Dorsolateral prefrontal cortex (tissue), 120 donors: ENCODE measurements at regions of chrX and their contacts with region 1.

Region 1: GRCh38 chrX:49043220-49043986 is at the start of gene TFE3:
- DNase-seq: peak; percentile 87 to 98 (median 97)
- H3K4me3 ChIP-seq: peak within 1 kb of the TSS; percentile 45 to 88 (median 75)
- H3K27ac ChIP-seq: peak within 1 kb of the TSS in 58 of 59 donors; percentile 61 to 98 (median 93)
- H3K27me3 ChIP-seq: peaks cover 0 to 20% (median 0%) of the 10 kb centered on the region in 45 donors
- CTCF ChIP-seq: peak; percentile 33 to 80 (median 66)
- total RNA-seq, gene TFE3: 45.0 to 84.2 (median 59.0) TPM

Region 2: DNA sequence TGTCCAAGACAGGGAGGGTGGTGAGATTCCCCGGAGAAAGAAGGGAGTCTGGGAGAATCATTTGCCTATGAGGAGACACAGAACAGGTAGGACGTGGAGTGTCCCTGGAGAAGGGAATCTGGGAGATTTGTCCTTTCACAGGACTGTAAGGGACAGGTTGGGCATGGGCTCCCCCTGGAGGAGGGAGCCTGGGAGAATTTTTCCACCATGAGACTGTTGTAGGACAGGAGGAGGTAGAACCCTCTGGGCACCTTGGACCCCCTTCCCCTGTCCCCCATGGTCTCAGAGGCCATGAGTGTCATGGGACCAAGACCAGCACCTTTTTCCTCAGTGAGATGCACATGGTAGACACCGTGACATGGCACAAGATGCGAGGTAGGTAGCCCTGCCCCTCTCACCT is 531.8 kb before region 1 on chrX:
- intact Hi-C with region 1: no loop called
- DNase-seq: no peak
- H3K4me3 ChIP-seq: no peak overlapping the region
- H3K27ac ChIP-seq: no peak overlapping the region
- H3K27me3 ChIP-seq: peaks cover 0 to 69% (median 5%) of the 10 kb centered on the region in 45 donors
- CTCF ChIP-seq: peak in 8 of 56 donors; percentile 10 to 20 (median 14)

Region 3: GRCh38 chrX:48957827-48958634 is 85.4 kb before region 1 on chrX:
- intact Hi-C with region 1: loop called in 1 of 2 experiments (anchors 5 kb)
- DNase-seq: peak; percentile 87 to 98 (median 96)
- H3K4me3 ChIP-seq: peak overlapping the region; percentile 34 to 79 (median 68)
- H3K27ac ChIP-seq: peak overlapping the region; percentile 79 to 99 (median 95)
- H3K27me3 ChIP-seq: peaks cover 0 to 41% (median 0%) of the 10 kb centered on the region in 45 donors
- CTCF ChIP-seq: peak in 1 of 56 donors; percentile 9

Region 4: DNA sequence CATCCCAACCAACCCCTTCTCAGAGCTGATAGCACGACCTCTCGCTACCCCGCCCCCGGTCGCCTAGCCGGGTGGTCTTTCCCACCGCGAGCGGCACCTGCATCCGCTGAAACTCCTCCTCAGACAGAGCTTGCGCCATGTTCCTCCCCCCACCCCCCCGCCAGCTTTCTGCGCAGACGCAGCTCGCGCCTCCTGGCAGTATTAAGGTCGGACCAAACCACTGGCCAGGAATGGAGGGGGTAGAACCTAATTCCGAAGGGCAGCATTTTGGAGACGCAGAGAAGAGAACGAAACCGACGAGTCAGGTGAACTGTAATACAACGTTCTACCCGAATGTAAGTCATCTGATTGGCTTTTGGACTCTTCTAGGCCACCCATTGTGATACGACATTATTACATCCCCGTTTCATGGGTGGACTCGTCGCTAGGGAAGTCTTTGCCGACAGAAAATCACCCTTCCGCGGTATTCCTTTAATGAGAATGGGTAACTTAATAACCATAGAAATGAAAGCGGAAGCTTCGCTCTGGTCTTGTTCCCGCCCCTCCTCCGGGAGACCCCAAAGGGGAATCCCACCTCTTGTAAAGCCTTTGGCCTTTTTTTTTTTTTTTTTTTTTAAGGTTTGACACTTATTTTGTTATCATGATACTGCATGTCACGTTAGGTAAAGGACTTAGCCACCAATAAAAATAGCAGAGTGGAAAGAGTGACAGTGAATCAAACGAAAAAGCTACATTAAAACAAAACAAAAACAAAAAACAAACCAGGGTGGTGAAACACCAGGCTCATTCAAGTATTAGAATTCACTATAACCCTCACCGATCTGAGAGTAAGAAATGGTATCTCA is 41.1 kb before region 1 on chrX and contains the start of gene GRIPAP1:
- intact Hi-C with region 1: loop called in 1 of 2 experiments (anchors 2 kb)
- DNase-seq: peak in 9 of 10 donors; percentile 24 to 71 (median 50)
- H3K4me3 ChIP-seq: peak within 1 kb of the TSS; percentile 41 to 86 (median 71)
- H3K27ac ChIP-seq: peak within 1 kb of the TSS in 58 of 59 donors; percentile 12 to 97 (median 88)
- H3K27me3 ChIP-seq: peaks cover 0 to 31% (median 0%) of the 10 kb centered on the region in 45 donors
- CTCF ChIP-seq: no peak
- total RNA-seq, gene GRIPAP1: 95.2 to 201 (median 126) TPM

Region 5: GRCh38 chrX:49079489-49080428 is 36.4 kb after region 1 on chrX and contains the start of gene WDR45:
- intact Hi-C with region 1: loop called in 1 of 2 experiments (anchors 5 kb)
- DNase-seq: peak; percentile 52 to 84 (median 73)
- H3K4me3 ChIP-seq: peak within 1 kb of the TSS; percentile 43 to 80 (median 70)
- H3K27ac ChIP-seq: peak within 1 kb of the TSS; percentile 63 to 96 (median 91)
- H3K27me3 ChIP-seq: peaks cover 0 to 42% (median 0%) of the 10 kb centered on the region in 45 donors
- CTCF ChIP-seq: no peak
- total RNA-seq, gene WDR45: 52.9 to 142 (median 77.9) TPM